ENCODE measurements at regions of chr4 and their contacts with region 1.

Region 1: GRCh38 chr4:26964512-26964911 is 103.9 kb downstream of the STIM2 start:
- DNase-seq: no peak
- ATAC-seq: no peak
- H3K4me3 ChIP-seq: no peak overlapping the region
- H3K4me3 Mint-ChIP-seq: no peak overlapping the region
- H3K27ac ChIP-seq: no peak overlapping the region
- H3K27ac Mint-ChIP-seq: peak overlapping the region; percentile 3
- H3K4me1 ChIP-seq: peaks cover 5% of the 10 kb centered on the region
- H3K4me1 Mint-ChIP-seq: peaks cover 60% of the 10 kb centered on the region
- H3K27me3 ChIP-seq: no peaks in the 10 kb centered on the region
- H3K27me3 Mint-ChIP-seq: no peaks in the 10 kb centered on the region
- CTCF ChIP-seq: no peak

Region 2: DNA sequence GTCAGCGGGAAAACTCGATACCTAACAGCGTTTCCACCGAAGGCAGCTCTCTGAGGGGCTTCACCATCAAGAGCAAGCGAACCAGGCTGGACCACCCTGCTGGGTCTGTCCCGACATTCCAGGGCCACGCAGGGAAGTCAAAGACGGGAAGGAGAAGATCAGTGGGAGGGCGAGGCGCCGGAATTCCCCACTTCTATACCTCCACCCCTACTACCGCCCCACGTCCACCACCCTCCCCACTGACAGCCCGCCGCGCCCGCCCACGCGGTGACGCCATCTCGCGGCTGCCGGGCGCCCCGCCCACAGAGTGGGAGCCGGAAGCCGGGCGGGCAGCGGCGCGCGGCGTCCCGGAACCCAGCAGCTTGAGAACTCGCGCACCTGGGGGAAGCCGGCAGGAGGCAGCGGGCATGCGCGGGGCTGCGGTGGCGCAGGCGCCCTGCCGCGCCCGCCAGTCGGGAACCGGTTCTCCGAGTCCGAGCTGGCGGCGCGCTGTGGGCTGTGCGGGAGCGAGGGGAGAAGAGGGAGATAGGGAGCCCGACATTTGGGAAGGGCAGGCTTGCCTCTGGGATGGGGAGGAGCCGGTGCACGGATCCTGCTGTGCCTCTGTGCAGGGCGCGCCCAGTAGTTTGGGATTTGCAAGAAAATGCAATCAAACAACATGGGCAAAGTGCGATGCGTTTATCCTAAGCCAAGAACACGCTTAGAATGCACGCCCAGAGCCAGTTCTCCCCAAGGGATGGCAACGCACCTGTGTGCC is 107.1 kb before region 1 on chr4:
- CTCF ChIA-PET with region 1: no interaction called
- POLR2A ChIA-PET with region 1: no interaction called
- intact Hi-C with region 1: no loop called
- DNase-seq: peak; percentile 87 to 98 (median 94)
- ATAC-seq: peak; percentile 63
- H3K4me3 ChIP-seq: peak overlapping the region; percentile 82 to 93
- H3K4me3 Mint-ChIP-seq: peak overlapping the region; percentile 98
- H3K27ac ChIP-seq: peak overlapping the region; percentile 89 to 96
- H3K27ac Mint-ChIP-seq: peak overlapping the region; percentile 99
- H3K4me1 ChIP-seq: peaks cover 31% of the 10 kb centered on the region
- H3K4me1 Mint-ChIP-seq: peaks cover 36% of the 10 kb centered on the region
- H3K27me3 ChIP-seq: no peaks in the 10 kb centered on the region
- H3K27me3 Mint-ChIP-seq: no peaks in the 10 kb centered on the region
- CTCF ChIP-seq: no peak

Region 3: GRCh38 chr4:26936284-26937065 is 28.0 kb before region 1 on chr4:
- CTCF ChIA-PET with region 1: no interaction called
- POLR2A ChIA-PET with region 1: no interaction called
- intact Hi-C with region 1: loop called in 1 of 2 experiments (anchors 2 kb)
- DNase-seq: peak in 2 of 9 experiments; percentile 13 to 34
- ATAC-seq: peak; percentile 62
- H3K4me3 ChIP-seq: no peak overlapping the region
- H3K4me3 Mint-ChIP-seq: no peak overlapping the region
- H3K27ac ChIP-seq: no peak overlapping the region
- H3K27ac Mint-ChIP-seq: peak overlapping the region; percentile 15
- H3K4me1 ChIP-seq: peaks cover 47% of the 10 kb centered on the region
- H3K4me1 Mint-ChIP-seq: peaks cover 74% of the 10 kb centered on the region
- H3K27me3 ChIP-seq: no peaks in the 10 kb centered on the region
- H3K27me3 Mint-ChIP-seq: no peaks in the 10 kb centered on the region
- CTCF ChIP-seq: no peak

Region 4: GRCh38 chr4:26985873-26986272 is 21.4 kb after region 1 on chr4:
- CTCF ChIA-PET with region 1: no interaction called
- POLR2A ChIA-PET with region 1: no interaction called
- intact Hi-C with region 1: loop called in 1 of 2 experiments (anchors 2 kb)
- DNase-seq: peak in 4 of 9 experiments; percentile 34 to 77 (median 50)
- ATAC-seq: peak; percentile 80
- H3K4me3 ChIP-seq: no peak overlapping the region
- H3K4me3 Mint-ChIP-seq: no peak overlapping the region
- H3K27ac ChIP-seq: peak overlapping the region in 1 of 2 experiments; percentile 12
- H3K27ac Mint-ChIP-seq: no peak overlapping the region
- H3K4me1 ChIP-seq: peaks cover 26% of the 10 kb centered on the region
- H3K4me1 Mint-ChIP-seq: peaks cover 61% of the 10 kb centered on the region
- H3K27me3 ChIP-seq: no peaks in the 10 kb centered on the region
- H3K27me3 Mint-ChIP-seq: no peaks in the 10 kb centered on the region
- CTCF ChIP-seq: no peak

Region 5: DNA sequence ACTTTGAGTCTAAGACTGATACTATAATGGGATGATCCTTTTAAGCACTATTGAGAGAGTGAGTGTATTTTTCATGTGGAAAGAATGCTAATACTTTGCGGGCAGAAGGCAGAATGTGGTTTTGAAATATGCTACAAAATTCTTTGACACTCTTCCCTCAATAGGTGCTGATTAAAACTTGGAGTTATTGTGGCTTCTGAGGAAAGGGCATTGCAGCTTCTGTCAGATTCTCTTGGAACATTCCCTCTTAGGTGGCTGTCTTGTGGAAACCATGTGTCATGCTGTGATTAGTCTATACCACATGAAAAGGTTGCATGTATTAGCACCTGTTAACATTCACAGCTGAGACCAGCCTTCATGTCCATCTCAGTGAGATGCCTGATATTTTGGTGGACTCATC is 443.1 kb after region 1 on chr4:
- CTCF ChIA-PET with region 1: no interaction called
- POLR2A ChIA-PET with region 1: no interaction called
- intact Hi-C with region 1: no loop called
- DNase-seq: no peak
- ATAC-seq: no peak
- H3K4me3 ChIP-seq: no peak overlapping the region
- H3K4me3 Mint-ChIP-seq: no peak overlapping the region
- H3K27ac ChIP-seq: no peak overlapping the region
- H3K27ac Mint-ChIP-seq: no peak overlapping the region
- H3K4me1 ChIP-seq: no peaks in the 10 kb centered on the region
- H3K4me1 Mint-ChIP-seq: no peaks in the 10 kb centered on the region
- H3K27me3 ChIP-seq: no peaks in the 10 kb centered on the region
- H3K27me3 Mint-ChIP-seq: no peaks in the 10 kb centered on the region
- CTCF ChIP-seq: no peak

Measured in CD8-positive, alpha-beta T cell (primary cell).